PC-9 (cell line): ENCODE measurements at regions of chr1 and their contacts with region 1.

Region 1: GRCh38 chr1:234772345-234773147 is 162.6 kb upstream of the IRF2BP2 start:
- DNase-seq: peak; percentile 95 to 99
- H3K4me3 ChIP-seq: peak overlapping the region; percentile 35; the same call in 1 of the 2 replicates
- H3K27ac ChIP-seq: peak overlapping the region; percentile 95
- H3K4me1 ChIP-seq: peaks cover 22% of the 10 kb centered on the region
- H3K27me3 ChIP-seq: no peaks in the 10 kb centered on the region
- CTCF ChIP-seq: no peak

Region 2: GRCh38 chr1:233364695-233365539 is 1407.6 kb before region 1 on chr1:
- CTCF ChIA-PET with region 1: no interaction called
- POLR2A ChIA-PET with region 1: interaction called, 16 read pairs
- intact Hi-C with region 1: no loop called
- DNase-seq: peak in 1 of 2 experiments; percentile 36
- H3K4me3 ChIP-seq: no peak overlapping the region
- H3K27ac ChIP-seq: no peak overlapping the region
- H3K4me1 ChIP-seq: peaks cover 26% of the 10 kb centered on the region
- H3K27me3 ChIP-seq: no peaks in the 10 kb centered on the region
- CTCF ChIP-seq: peak; percentile 85

Region 3: GRCh38 chr1:234683861-234684632 is 88.5 kb before region 1 on chr1:
- CTCF ChIA-PET with region 1: no interaction called
- POLR2A ChIA-PET with region 1: no interaction called
- intact Hi-C with region 1: no loop called
- DNase-seq: peak; percentile 56 to 82
- H3K4me3 ChIP-seq: 0 out of 2 replicates have a peak overlapping the region, but pooled peaks have one; percentile 3
- H3K27ac ChIP-seq: peak overlapping the region; percentile 10
- H3K4me1 ChIP-seq: peaks cover 17% of the 10 kb centered on the region
- H3K27me3 ChIP-seq: no peaks in the 10 kb centered on the region
- CTCF ChIP-seq: no peak

Region 4: DNA sequence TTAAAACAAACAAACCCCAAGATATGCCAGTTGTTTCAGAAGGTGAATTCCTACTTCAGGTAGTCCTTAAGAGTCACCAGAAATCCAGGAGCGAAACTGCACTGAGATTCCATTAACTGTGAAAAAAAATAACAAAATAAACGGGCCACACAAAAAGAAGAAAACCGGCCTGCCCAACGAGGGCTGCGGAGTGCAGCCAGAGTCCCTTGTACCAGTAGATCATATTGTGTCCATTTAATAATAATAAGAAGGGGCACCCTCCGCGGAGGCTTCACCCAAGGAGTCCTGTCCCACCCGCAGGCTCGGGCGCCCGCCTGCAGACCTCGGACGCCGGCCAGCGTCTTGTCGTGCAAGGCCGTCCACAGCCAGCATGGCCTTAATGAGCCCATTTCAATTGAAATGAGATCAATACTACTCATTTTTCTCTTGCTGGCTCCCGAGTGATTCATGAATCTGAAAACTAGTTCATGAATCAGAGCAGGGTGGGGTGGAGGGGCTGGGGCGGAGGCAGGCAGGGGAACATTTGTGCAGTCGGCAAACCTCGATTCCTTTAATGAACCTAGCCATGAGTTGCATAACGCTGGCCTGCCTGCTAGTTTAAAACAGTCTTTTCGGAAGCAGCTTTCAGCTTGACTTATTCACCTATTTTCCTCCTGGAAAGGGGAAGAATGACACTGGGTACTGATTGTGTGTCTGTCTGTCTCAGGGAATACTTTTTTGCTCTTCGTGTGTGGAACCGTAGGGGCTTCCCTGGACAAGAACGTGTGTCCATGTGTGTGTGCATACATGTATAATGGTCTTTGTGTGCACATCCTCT is 49.4 kb before region 1 on chr1:
- CTCF ChIA-PET with region 1: interaction called, 8 read pairs
- POLR2A ChIA-PET with region 1: interaction called, 26 read pairs
- intact Hi-C with region 1: loop called (anchors 1 kb)
- DNase-seq: peak in 1 of 2 experiments; percentile 90
- H3K4me3 ChIP-seq: peak overlapping the region; percentile 53
- H3K27ac ChIP-seq: peak overlapping the region; percentile 97
- H3K4me1 ChIP-seq: peaks cover 71% of the 10 kb centered on the region
- H3K27me3 ChIP-seq: no peaks in the 10 kb centered on the region
- CTCF ChIP-seq: no peak

Region 5: DNA sequence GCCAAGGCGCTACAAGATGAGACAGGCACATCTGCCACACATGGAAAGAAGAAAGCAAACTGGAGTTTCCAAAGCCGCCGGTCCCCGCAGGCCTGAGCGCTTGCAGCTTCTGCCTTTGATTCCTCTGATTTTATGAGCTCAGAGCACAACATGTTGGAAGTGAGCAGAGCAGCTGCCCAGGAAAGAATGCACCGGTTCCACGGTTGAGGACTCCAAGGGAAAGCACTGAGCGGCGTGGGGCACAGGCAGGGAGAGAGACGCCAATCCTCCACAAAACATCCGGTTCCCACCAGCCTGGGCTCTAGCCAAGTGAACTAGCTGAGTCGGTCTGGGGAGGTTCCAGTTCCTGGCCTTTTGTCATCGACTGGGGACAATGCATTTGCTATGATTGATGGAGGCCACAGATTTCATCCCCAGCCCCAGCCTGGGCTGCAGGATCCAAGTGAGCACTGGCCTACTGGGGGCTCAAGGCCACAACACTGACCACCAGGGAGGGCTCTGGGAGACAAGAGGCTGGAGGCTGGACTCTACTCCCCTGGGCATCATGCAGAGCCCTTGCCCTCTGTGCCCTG is 90.5 kb after region 1 on chr1:
- CTCF ChIA-PET with region 1: no interaction called
- POLR2A ChIA-PET with region 1: no interaction called
- intact Hi-C with region 1: loop called (anchors 1 kb)
- DNase-seq: no peak
- H3K4me3 ChIP-seq: no peak overlapping the region
- H3K27ac ChIP-seq: no peak overlapping the region
- H3K4me1 ChIP-seq: peaks cover 56% of the 10 kb centered on the region
- H3K27me3 ChIP-seq: no peaks in the 10 kb centered on the region
- CTCF ChIP-seq: no peak

Region 6: DNA sequence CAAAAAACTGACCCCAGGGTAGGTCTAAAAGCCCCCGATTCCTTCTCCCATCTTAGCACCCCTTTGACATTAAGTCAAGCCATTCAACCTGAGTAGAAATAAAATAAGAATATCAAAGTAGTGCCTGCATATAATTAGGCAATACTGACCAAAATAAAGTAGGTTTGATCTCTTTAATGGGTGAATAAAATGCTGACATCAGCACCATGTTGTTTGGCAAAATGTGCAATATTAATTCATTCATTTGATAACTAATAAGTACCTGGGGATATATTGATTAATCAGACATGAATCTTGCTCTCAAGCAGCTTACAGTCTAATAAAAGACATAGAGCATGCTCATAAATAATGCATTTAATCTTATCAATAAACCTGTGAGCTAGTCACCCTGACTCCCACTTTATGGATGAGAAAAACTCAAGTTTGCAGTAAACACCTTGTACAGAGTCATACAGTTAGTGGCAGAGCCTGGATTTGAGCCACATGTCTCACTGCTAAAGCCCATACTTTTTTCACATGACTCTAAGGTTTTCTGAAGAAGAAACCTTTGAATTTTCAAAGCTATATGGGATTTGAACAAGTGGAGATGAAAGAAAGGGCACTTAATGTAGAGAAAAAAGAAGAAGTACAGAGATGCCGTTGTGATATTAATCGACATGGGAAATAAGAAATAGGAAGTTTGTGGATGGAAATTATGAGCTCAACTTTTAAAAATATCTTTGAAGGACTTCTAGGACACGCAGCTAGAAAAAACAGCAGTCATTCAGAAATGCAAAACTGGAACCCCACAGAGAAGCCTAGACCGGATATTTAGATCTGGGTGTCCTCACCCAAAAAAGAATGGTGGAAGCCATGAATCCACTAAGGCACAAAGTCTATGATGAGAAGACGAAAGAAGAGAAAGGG is 172.1 kb after region 1 on chr1:
- CTCF ChIA-PET with region 1: no interaction called
- POLR2A ChIA-PET with region 1: interaction called, 19 read pairs
- intact Hi-C with region 1: no loop called
- DNase-seq: no peak
- H3K4me3 ChIP-seq: no peak overlapping the region
- H3K27ac ChIP-seq: no peak overlapping the region
- H3K4me1 ChIP-seq: no peaks in the 10 kb centered on the region
- H3K27me3 ChIP-seq: no peaks in the 10 kb centered on the region
- CTCF ChIP-seq: no peak

Region 7: DNA sequence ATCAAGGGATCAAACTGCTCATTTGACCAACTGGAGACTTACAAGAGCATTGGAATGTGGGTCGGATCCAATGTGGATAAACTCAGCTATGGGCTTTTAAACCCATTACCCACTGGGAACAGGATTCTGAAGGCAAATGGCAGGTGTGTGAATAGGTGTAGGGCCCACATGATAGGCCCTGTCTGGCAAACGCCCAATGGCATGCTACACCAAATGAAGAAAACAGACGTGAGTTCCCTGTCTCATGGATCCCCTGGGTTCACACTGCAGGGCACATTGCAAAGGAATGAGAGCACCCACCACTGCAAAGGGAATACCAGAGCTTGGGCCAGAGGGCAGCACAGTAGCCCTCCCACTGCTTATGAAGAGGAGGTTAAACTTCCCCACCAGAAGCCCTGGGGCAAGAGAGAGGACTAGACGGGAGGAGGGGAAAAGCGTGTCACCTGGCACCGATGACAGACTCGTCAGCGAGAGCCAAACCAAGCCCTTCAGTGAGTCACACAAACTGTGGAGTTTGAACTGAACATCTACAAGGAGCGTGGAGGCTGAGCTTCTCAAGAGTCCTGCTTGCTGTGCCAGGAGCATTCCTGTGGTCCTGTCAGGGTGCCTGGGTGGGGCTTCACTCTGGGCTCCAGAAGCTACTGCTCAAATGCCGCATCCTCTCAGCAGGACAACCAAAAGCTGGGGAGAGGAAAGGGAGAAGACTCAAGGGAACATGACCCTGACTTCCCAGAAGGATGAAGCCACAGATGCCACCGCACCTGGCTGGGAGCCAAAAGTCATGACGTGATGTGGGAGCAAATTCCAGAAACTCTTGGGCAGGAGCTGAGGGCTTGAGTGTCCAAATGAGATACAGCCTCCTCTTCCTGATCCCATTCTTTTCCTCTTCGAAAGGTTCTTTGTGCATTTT is 295.0 kb after region 1 on chr1:
- CTCF ChIA-PET with region 1: no interaction called
- POLR2A ChIA-PET with region 1: no interaction called
- intact Hi-C with region 1: loop called (anchors 1 kb)
- DNase-seq: peak; percentile 98 to 100
- H3K4me3 ChIP-seq: peak overlapping the region; percentile 39; the same call in 1 of the 2 replicates
- H3K27ac ChIP-seq: peak overlapping the region; percentile 100
- H3K4me1 ChIP-seq: peaks cover 68% of the 10 kb centered on the region
- H3K27me3 ChIP-seq: no peaks in the 10 kb centered on the region
- CTCF ChIP-seq: no peak

Region 8: DNA sequence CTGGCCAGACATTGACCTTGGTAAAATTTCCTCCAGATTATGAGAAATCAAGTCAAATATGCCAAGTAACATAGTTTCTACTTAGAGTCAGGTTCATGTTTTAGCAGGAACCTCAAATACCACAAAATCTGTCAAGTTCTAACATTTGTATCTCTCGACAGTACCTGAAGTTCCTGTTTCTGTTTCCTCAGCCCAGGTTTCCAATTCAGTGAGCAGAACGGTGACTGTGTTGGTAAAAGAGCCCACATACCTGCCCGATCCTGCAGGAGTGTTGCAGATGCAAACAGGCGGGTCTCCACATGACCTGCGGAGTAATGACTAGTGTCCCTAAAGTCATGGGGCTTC is 1693.4 kb after region 1 on chr1:
- CTCF ChIA-PET with region 1: no interaction called
- POLR2A ChIA-PET with region 1: no interaction called
- intact Hi-C with region 1: no loop called
- DNase-seq: peak in 1 of 2 experiments; percentile 66
- H3K4me3 ChIP-seq: no peak overlapping the region
- H3K27ac ChIP-seq: no peak overlapping the region
- H3K4me1 ChIP-seq: peaks cover 7% of the 10 kb centered on the region
- H3K27me3 ChIP-seq: no peaks in the 10 kb centered on the region
- CTCF ChIP-seq: no peak